Right ventricle myocardium inferior (tissue), 1 donor: ENCODE measurements at regions of chr19 and their contacts with region 1.

Region 1: DNA sequence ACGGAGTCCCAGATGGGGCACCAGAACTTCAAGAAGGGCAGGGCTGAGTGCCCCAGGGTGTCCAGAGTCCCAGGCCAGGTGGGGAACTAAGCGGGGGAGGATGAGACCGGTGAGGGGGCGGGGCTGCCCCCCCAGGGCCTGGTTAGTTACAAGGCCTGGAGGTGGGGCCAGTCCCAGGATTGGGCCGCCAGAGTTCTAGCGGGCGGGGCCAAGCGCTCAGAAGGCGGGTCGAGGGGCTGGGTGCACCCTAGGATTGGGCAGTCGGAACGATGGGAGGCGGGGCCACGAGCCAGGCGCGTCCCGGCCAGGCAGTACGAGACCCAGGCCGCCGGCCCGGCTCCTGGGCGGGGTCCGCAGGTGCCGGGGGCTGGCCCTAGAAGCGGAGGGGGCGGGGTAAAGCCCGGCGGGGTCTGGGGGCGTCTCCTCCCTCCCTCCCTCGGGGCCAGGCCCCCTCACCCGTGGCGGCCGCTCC is 571 bp downstream of the ZNF653 start:
- DNase-seq: peak; percentile 98
- ATAC-seq: peak; percentile 96

Region 2: GRCh38 chr19:11435058-11435832 is 69.8 kb before region 1 on chr19 and contains the starts of genes ODAD3 and PRKCSH:
- intact Hi-C with region 1: loop called (anchors 2 kb)
- DNase-seq: peak; percentile 99
- ATAC-seq: peak; percentile 98
- total RNA-seq, gene ODAD3: 0.68 TPM
- total RNA-seq, gene PRKCSH: 123 TPM

Region 3: DNA sequence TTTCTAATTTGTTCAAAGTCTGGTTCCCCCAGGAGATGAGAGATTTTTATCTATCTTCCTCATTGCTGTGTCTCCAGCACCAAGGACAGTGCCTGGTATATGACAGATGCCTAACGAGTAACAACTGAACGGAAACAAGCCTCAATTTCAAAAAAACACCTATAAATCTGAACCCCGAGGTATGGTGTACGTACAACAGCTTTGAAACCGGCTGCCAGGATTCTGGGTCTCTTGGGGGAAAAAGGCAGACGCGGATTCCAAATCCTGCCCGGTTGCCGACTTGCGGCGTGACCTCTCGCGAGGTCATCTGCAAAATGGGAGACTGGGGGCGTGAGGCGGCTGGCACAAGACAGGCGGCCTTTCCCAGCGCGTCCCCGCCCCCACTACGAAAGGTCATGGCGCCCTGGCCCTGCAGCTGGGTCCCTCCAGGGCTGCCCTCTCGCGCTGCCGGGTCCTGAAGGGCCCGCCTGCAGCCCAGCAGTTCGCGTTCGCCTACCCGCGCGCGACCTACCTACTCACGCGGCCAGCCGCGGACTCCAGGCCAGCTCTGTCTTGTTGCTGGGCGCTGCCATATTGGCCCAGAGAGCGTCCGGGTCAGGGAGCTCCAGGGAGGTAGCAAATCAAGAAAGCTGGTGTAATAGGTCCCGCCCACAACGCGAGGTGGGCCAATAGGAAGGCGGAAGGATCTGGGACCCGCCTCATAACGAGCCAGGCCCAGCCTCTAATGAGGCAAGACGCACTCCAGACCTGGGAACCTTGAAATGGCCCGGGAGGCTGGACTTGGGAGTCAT is 23.7 kb after region 1 on chr19 and contains the start of gene ECSIT:
- intact Hi-C with region 1: loop called (anchors 1 kb)
- DNase-seq: peak; percentile 98
- ATAC-seq: peak; percentile 100
- total RNA-seq, gene ECSIT: 172 TPM